Head of caudate nucleus (tissue), 42 donors: ENCODE measurements at regions of chr4 and their contacts with region 1.

Region 1: DNA sequence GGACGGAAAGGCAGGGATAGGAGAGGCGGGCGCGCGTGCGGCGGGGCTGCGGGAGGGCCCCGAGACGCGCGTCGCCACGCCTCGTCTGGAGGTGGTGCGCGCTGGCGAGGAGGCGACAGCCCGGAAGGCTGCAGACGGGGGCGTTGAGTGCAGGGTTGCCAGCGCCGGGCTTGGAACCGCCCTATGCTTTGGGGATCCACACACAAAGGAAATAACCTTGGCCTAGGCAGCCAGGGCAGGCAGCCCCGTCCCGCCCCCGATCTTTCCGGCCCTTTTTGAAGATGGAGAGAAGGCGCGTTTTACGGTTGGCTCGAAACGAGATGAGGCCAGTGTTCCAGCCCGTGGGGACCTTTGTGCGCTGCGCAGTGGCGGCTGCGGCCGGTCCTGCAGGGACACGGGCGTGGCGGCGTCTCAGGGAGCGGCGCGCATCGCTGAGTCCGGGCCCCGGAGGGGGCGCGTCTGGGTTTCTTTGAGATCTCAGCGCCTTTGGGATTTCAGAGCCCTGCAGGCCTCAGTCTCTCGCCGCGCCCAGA is 50.8 kb upstream of the TRIM2 start:
- DNase-seq: peak in 41 of 42 donors; percentile 25 to 89 (median 74)

Region 2: GRCh38 chr4:153084980-153085630 is 68.3 kb before region 1 on chr4:
- intact Hi-C with region 1: no loop called
- DNase-seq: peak; percentile 56 to 96 (median 88)

Region 3: GRCh38 chr4:153204247-153205027 is 51.0 kb after region 1 on chr4 and contains the start of gene TRIM2:
- intact Hi-C with region 1: loop called (anchors 5 kb)
- DNase-seq: peak; percentile 64 to 96 (median 88)

Region 4: GRCh38 chr4:153221783-153222706 is 68.6 kb after region 1 on chr4:
- intact Hi-C with region 1: loop called (anchors 5 kb)
- DNase-seq: peak; percentile 33 to 88 (median 65)